ENCODE measurements at regions of chr12 and their contacts with region 1.

Region 1: DNA sequence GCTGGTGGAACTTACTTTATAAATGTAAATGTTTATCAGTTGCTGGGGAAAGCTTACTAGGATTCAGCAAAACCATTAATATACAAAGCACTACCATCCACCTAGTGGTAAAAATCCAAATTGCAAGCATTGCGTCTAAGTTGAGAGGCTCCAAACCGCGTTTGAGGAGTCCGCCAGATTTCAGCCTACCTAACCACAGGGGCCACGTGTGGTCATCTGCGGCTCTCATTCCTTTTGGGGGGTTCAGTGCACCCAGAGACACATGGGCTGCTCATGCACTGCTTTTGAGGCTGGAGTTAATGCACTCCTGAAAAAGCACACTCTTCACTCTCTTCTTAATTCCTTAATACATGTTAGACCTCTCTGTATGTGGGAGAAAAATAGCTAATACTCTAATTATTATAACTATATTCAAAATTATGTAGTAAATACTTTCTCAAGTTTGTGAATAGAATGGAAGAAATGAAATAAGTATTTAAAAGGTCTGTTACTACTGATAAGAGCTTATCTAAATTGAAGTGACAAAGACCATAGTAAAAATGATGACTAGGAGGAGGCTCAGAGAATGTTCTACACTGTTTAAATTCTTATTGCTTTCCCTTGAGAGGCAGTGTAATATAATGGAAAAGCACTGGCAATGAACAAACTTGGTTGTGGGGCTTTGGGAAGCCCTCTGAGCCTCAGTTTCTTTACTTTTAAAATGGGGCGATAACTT is 41.4 kb upstream of the MANSC4 start:
- DNase-seq: no peak
- ATAC-seq: peak; percentile 85

Region 2: DNA sequence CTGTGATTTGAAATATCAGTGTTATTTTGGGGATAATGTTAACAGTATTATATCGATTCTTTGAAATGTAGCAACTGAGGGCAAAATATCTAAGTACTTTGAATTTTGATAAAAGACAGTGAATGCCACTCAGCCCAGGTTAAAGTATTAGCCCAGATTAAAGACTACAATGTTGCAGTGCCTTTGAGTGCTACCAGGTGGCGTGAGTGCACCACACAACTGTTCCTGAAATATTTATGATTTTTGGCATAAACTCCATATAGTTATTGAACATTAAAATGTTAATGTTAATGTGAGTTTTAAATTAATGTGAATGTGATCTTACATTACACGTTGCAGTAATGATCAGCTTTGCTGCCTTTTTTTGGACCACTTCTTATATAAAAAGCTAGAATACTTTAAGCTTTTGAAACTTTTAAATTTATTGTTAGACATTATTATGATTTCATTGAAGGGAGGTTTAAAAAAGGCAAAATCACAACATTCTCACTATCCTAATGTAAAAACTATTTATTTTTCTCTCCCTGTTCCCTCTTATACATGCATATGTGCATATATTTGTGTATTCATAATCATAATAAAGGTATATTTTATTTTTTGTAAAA is 88.3 kb before region 1 on chr12:
- intact Hi-C with region 1: loop called (anchors 10 kb)
- DNase-seq: no peak
- ATAC-seq: peak; percentile 55

Region 3: DNA sequence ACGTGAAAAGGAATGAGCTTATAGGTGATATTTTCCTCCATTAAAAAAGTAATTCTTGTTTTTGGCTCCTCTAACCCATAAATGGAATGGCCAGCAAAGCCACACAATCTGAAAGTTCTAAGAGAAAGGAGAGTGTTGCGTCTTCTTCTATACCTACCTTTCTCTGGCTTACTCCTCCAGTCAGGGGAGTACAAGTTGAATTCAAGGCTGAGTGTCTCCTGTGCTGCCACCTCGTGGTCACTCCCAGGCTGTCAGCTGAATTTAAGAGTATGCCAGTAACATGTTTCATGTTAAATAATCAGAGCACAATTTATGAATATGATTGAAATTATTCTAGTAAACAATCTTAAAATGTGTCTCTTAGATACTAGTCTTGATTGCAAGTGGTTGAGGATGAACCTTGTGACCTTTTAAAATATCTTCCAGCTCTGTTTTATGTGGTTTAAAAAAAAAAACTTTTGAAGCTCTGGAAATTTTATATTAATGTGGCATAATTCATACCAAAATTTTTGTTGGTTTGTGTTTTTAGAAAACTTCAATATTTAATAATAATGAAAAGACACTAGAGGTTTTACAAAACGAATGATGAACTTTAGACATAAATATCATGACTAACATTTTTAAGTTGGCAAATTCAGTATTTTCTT is 119.5 kb after region 1 on chr12:
- intact Hi-C with region 1: no loop called
- DNase-seq: peak; percentile 85
- ATAC-seq: peak; percentile 74

Measured in sciatic nerve (tissue), 2 donors.